ENCODE measurements at regions of chr18 and their contacts with region 1.

Region 1: GRCh38 chr18:34787931-34788532 is 77.9 kb downstream of the DTNA start:
- DNase-seq: peak in 5 of 9 donors; percentile 11 to 35 (median 30)
- ATAC-seq: peak; percentile 71
- H3K4me3 ChIP-seq: no peak overlapping the region
- H3K4me3 Mint-ChIP-seq: no peak overlapping the region
- H3K27ac ChIP-seq: no peak overlapping the region
- H3K27ac Mint-ChIP-seq: no peak overlapping the region
- H3K4me1 ChIP-seq: no peaks in the 10 kb centered on the region
- H3K4me1 Mint-ChIP-seq: peaks cover 0 to 6% (median 0%) of the 10 kb centered on the region in 7 donors
- H3K27me3 ChIP-seq: no peaks in the 10 kb centered on the region
- H3K27me3 Mint-ChIP-seq: peaks cover 8 to 29% (median 22%) of the 10 kb centered on the region in 5 donors

Region 2: GRCh38 chr18:33839441-33840211 is 948.4 kb before region 1 on chr18:
- CTCF ChIA-PET with region 1: no interaction called
- POLR2A ChIA-PET with region 1: no interaction called
- intact Hi-C with region 1: loop called in 1 of 2 experiments (anchors 2 kb)
- DNase-seq: no peak
- ATAC-seq: no peak
- H3K4me3 ChIP-seq: no peak overlapping the region
- H3K4me3 Mint-ChIP-seq: no peak overlapping the region
- H3K27ac ChIP-seq: no peak overlapping the region
- H3K27ac Mint-ChIP-seq: no peak overlapping the region
- H3K4me1 ChIP-seq: no peaks in the 10 kb centered on the region
- H3K4me1 Mint-ChIP-seq: no peaks in the 10 kb centered on the region
- H3K27me3 ChIP-seq: no peaks in the 10 kb centered on the region
- H3K27me3 Mint-ChIP-seq: no peaks in the 10 kb centered on the region

Region 3: GRCh38 chr18:34661464-34662111 is 126.4 kb before region 1 on chr18:
- CTCF ChIA-PET with region 1: no interaction called
- POLR2A ChIA-PET with region 1: no interaction called
- intact Hi-C with region 1: loop called (anchors 1 kb)
- DNase-seq: peak in 1 of 9 donors; percentile 9
- ATAC-seq: peak; percentile 53
- H3K4me3 ChIP-seq: no peak overlapping the region
- H3K4me3 Mint-ChIP-seq: no peak overlapping the region
- H3K27ac ChIP-seq: no peak overlapping the region
- H3K27ac Mint-ChIP-seq: no peak overlapping the region
- H3K4me1 ChIP-seq: no peaks in the 10 kb centered on the region
- H3K4me1 Mint-ChIP-seq: no peaks in the 10 kb centered on the region
- H3K27me3 ChIP-seq: no peaks in the 10 kb centered on the region
- H3K27me3 Mint-ChIP-seq: peaks cover 13 to 22% (median 21%) of the 10 kb centered on the region in 5 donors

Region 4: DNA sequence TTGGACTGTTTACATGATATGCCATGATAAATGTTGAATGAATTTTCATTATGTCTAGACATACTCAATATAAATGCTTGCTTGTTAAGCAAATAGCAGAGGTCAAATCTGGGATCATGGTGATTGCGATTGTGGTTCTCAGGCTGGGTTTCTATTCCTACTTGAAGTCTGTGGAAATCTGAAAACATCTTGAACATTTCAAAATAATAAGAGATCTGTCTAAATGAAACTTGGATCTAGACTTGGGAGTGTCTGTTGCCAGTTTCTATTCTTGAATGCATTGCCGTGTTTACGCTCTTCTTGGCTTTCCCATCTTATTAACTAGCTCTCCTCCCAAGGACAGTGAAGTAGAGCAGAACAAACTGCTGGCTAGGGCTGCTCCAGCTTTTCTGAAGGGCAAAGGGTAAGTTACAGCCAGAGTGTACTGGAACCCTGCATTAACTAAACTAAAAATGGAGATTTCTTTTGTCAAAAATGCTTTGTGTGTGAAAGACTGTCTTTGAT is 49.8 kb after region 1 on chr18:
- CTCF ChIA-PET with region 1: no interaction called
- POLR2A ChIA-PET with region 1: no interaction called
- intact Hi-C with region 1: no loop called
- DNase-seq: no peak
- ATAC-seq: no peak
- H3K4me3 ChIP-seq: no peak overlapping the region
- H3K4me3 Mint-ChIP-seq: no peak overlapping the region
- H3K27ac ChIP-seq: no peak overlapping the region
- H3K27ac Mint-ChIP-seq: no peak overlapping the region
- H3K4me1 ChIP-seq: no peaks in the 10 kb centered on the region
- H3K4me1 Mint-ChIP-seq: peaks cover 0 to 11% (median 0%) of the 10 kb centered on the region in 7 donors
- H3K27me3 ChIP-seq: no peaks in the 10 kb centered on the region
- H3K27me3 Mint-ChIP-seq: peaks cover 4 to 24% (median 9%) of the 10 kb centered on the region in 5 donors

Region 5: GRCh38 chr18:34867520-34867919 is 79.5 kb after region 1 on chr18:
- CTCF ChIA-PET with region 1: no interaction called
- POLR2A ChIA-PET with region 1: no interaction called
- intact Hi-C with region 1: loop called in 1 of 2 experiments (anchors 5 kb)
- DNase-seq: no peak
- ATAC-seq: no peak
- H3K4me3 ChIP-seq: no peak overlapping the region
- H3K4me3 Mint-ChIP-seq: no peak overlapping the region
- H3K27ac ChIP-seq: no peak overlapping the region
- H3K27ac Mint-ChIP-seq: no peak overlapping the region
- H3K4me1 ChIP-seq: no peaks in the 10 kb centered on the region
- H3K4me1 Mint-ChIP-seq: peaks cover 0 to 24% (median 9%) of the 10 kb centered on the region in 7 donors
- H3K27me3 ChIP-seq: no peaks in the 10 kb centered on the region
- H3K27me3 Mint-ChIP-seq: peaks cover 0 to 10% (median 0%) of the 10 kb centered on the region in 5 donors